A673 (cell line): ENCODE measurements at regions of chr5 and their contacts with region 1.

Region 1: DNA sequence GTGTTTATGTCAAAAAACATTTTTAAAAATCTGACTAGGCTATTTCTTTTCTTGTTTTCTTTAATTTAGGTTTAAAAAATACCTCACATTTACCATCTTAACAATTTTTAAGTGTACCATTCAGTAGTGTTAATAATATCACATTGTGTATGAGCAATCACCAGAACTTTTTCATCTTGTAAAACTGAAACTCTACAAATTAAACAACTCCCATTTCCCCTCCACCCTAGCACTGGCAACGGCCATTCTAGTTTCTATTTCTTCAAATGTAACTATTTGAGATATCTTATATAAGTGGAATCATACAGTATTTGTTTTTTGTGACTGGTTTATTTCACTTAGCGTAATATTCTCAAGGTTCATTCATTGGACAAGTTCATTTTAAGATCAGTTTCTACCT is 27.7 kb downstream of the PLCXD3 start:
- DNase-seq: no peak
- H3K4me3 ChIP-seq: no peak overlapping the region
- H3K27ac ChIP-seq: no peak overlapping the region
- H3K4me1 ChIP-seq: no peaks in the 10 kb centered on the region
- H3K27me3 ChIP-seq: no peaks in the 10 kb centered on the region
- CTCF ChIP-seq: no peak

Region 2: GRCh38 chr5:41465493-41466171 is 17.1 kb before region 1 on chr5:
- CTCF ChIA-PET with region 1: interaction called, 11 read pairs
- POLR2A ChIA-PET with region 1: no interaction called
- intact Hi-C with region 1: no loop called
- DNase-seq: no peak
- H3K4me3 ChIP-seq: no peak overlapping the region
- H3K27ac ChIP-seq: no peak overlapping the region
- H3K4me1 ChIP-seq: no peaks in the 10 kb centered on the region
- H3K27me3 ChIP-seq: no peaks in the 10 kb centered on the region
- CTCF ChIP-seq: no peak

Region 3: GRCh38 chr5:41940641-41941040 is 457.9 kb after region 1 on chr5:
- CTCF ChIA-PET with region 1: no interaction called
- POLR2A ChIA-PET with region 1: no interaction called
- intact Hi-C with region 1: no loop called
- DNase-seq: no peak
- H3K4me3 ChIP-seq: no peak overlapping the region
- H3K27ac ChIP-seq: no peak overlapping the region
- H3K4me1 ChIP-seq: no peaks in the 10 kb centered on the region
- H3K27me3 ChIP-seq: no peaks in the 10 kb centered on the region
- CTCF ChIP-seq: no peak